Activated CD8-positive, alpha-beta T cell treated with anti-CD3 and anti-CD28 coated beads for 36 hours (primary cell): ENCODE measurements at regions of chr5 and their contacts with region 1.

Region 1: GRCh38 chr5:81165493-81166119 is 67.5 kb upstream of the CKMT2 start:
- DNase-seq: peak; percentile 86
- ATAC-seq: peak; percentile 88
- H3K4me3 Mint-ChIP-seq: no peak overlapping the region
- H3K27ac Mint-ChIP-seq: no peak overlapping the region
- H3K4me1 Mint-ChIP-seq: peaks cover 16% of the 10 kb centered on the region
- H3K27me3 Mint-ChIP-seq: no peaks in the 10 kb centered on the region
- CTCF ChIP-seq: peak; percentile 78

Region 2: GRCh38 chr5:80686757-80687156 is 478.8 kb before region 1 on chr5:
- CTCF ChIA-PET with region 1: interaction called, 4 read pairs
- POLR2A ChIA-PET with region 1: no interaction called
- intact Hi-C with region 1: loop called (anchors 5 kb)
- DNase-seq: no peak
- ATAC-seq: no peak
- H3K4me3 Mint-ChIP-seq: no peak overlapping the region
- H3K27ac Mint-ChIP-seq: no peak overlapping the region
- H3K4me1 Mint-ChIP-seq: peaks cover 19% of the 10 kb centered on the region
- H3K27me3 Mint-ChIP-seq: no peaks in the 10 kb centered on the region
- CTCF ChIP-seq: peak; percentile 25